Ovary (tissue), 10 donors: ENCODE measurements at regions of chr13 and their contacts with region 1.

Region 1: GRCh38 chr13:36096461-36097416 is 34.4 kb downstream of the DCLK1 start:
- DNase-seq: no peak
- H3K4me3 ChIP-seq: no peak overlapping the region
- H3K27ac ChIP-seq: peak overlapping the region in 1 of 2 donors; percentile 12
- H3K4me1 ChIP-seq: peaks cover 5% of the 10 kb centered on the region
- H3K27me3 ChIP-seq: no peaks in the 10 kb centered on the region
- CTCF ChIP-seq: no peak
- EP300 ChIP-seq: no peak
- POLR2A ChIP-seq: no peak

Region 2: GRCh38 chr13:36115285-36115684 is 18.5 kb after region 1 on chr13:
- intact Hi-C with region 1: loop called in 1 of 4 experiments (anchors 1 kb)
- DNase-seq: no peak
- H3K4me3 ChIP-seq: no peak overlapping the region
- H3K27ac ChIP-seq: no peak overlapping the region
- H3K4me1 ChIP-seq: no peaks in the 10 kb centered on the region
- H3K27me3 ChIP-seq: no peaks in the 10 kb centered on the region
- CTCF ChIP-seq: no peak
- EP300 ChIP-seq: no peak
- POLR2A ChIP-seq: no peak

Region 3: GRCh38 chr13:36163809-36164308 is 67.1 kb after region 1 on chr13:
- intact Hi-C with region 1: no loop called
- DNase-seq: peak; percentile 40 to 82 (median 64)
- H3K4me3 ChIP-seq: no peak overlapping the region
- H3K27ac ChIP-seq: no peak overlapping the region
- H3K4me1 ChIP-seq: no peaks in the 10 kb centered on the region
- H3K27me3 ChIP-seq: no peaks in the 10 kb centered on the region
- CTCF ChIP-seq: no peak
- EP300 ChIP-seq: no peak
- POLR2A ChIP-seq: no peak

Region 4: DNA sequence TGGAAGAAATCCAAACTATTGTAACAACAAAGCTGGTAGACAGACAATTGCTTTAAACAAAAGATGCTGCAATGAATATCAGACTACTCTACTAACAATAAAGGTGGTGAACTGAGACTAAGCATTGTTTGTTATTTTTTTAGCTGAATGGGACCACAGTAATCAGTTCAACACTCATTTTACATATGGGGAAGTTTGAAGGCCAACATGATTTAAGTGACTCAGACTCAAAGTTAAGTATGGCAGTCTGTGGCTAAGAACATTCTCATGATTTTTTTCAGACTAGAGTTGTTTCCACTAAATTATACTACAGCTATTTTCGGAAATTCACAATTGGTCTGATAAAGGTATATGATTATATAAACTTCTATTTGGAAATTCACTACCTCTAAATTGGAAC is 914.3 kb after region 1 on chr13:
- intact Hi-C with region 1: no loop called
- DNase-seq: no peak
- H3K4me3 ChIP-seq: no peak overlapping the region
- H3K27ac ChIP-seq: no peak overlapping the region
- H3K4me1 ChIP-seq: no peaks in the 10 kb centered on the region
- H3K27me3 ChIP-seq: no peaks in the 10 kb centered on the region
- CTCF ChIP-seq: no peak
- EP300 ChIP-seq: no peak
- POLR2A ChIP-seq: no peak